Motor neuron (in vitro differentiated cells): ENCODE measurements at regions of chr17 and their contacts with region 1.

Region 1: GRCh38 chr17:64281962-64282727 is 19.1 kb upstream of the TEX2 start:
- ATAC-seq: peak; percentile 31 to 86 (median 50)
- H3K4me3 ChIP-seq: no peak overlapping the region
- H3K27ac ChIP-seq: no peak overlapping the region
- H3K4me1 ChIP-seq: peaks cover 0 to 6% of the 10 kb centered on the region in 2 donors

Region 2: DNA sequence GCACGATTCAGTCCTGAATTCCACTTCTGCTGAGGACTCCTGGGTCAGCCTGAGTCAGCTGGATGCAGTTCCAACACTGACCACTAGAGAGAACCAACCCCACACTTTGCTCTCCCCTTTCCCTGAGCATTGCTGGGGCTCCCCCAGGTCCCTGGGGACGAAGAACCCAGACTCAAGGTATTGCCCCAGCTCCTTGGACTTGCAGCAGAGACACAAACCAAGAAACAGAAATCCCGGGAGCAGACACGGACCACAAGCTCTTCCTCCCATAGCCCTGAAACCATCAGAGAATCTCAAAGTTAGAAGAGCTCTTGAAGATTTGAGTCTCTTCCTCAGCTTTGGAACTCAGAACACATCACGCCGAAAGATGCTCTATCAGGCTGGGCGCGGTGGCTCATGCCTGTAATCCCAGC is 362.8 kb before region 1 on chr17:
- in situ Hi-C with region 1: loop called in 1 of 9 experiments (anchors 25 kb)
- ATAC-seq: peak; percentile 56 to 93 (median 74)
- H3K4me3 ChIP-seq: no peak overlapping the region
- H3K27ac ChIP-seq: no peak overlapping the region
- H3K4me1 ChIP-seq: no peaks in the 10 kb centered on the region

Region 3: GRCh38 chr17:64025732-64026294 is 256.3 kb before region 1 on chr17:
- in situ Hi-C with region 1: loop called in 3 of 9 experiments (anchors 25 kb)
- ATAC-seq: peak in 4 of 8 experiments; percentile 36 to 94 (median 84)
- H3K4me3 ChIP-seq: no peak overlapping the region
- H3K27ac ChIP-seq: no peak overlapping the region
- H3K4me1 ChIP-seq: no peaks in the 10 kb centered on the region